A549 (cell line): ENCODE measurements at regions of chr5 and their contacts with region 1.

Region 1: GRCh38 chr5:16160706-16161105 is 18.9 kb downstream of the MARCHF11 start:
- DNase-seq: peak; percentile 20 to 73
- ATAC-seq: peak; percentile 95
- H3K4me3 ChIP-seq: no peak overlapping the region
- H3K27ac ChIP-seq: no peak overlapping the region
- H3K4me1 ChIP-seq: no peaks in the 10 kb centered on the region
- CTCF ChIP-seq: peak; percentile 70
- EP300 ChIP-seq: no peak
- POLR2A ChIP-seq: no peak
- RAD21 ChIP-seq: peak; percentile 68 to 77

Region 2: DNA sequence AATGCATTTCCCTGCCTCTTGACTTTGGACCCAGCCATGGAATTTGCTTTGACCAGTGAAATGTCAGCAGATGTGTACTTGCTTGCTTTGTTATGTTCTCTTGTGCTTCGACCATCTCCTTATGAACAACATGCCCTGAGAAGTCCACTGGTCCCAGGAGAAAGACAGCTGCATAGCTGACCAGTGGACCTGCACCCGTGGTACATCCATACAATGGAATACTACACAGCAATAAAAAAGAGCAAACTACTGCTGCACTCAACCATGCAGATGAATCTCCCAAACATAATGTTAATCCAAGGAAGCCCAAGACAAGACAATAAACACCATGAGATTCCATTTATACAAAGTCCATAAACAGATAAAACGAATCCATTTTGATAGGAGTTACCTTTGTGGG is 11.1 kb before region 1 on chr5:
- CTCF ChIA-PET with region 1: interaction called, 23 read pairs
- POLR2A ChIA-PET with region 1: no interaction called
- DNase-seq: no peak
- ATAC-seq: no peak
- H3K4me3 ChIP-seq: no peak overlapping the region
- H3K27ac ChIP-seq: no peak overlapping the region
- H3K4me1 ChIP-seq: no peaks in the 10 kb centered on the region
- CTCF ChIP-seq: no peak
- EP300 ChIP-seq: no peak
- POLR2A ChIP-seq: no peak
- RAD21 ChIP-seq: no peak

Region 3: GRCh38 chr5:16178745-16179372 is 18.2 kb after region 1 on chr5:
- CTCF ChIA-PET with region 1: interaction called, 11 read pairs
- POLR2A ChIA-PET with region 1: no interaction called
- DNase-seq: no peak
- ATAC-seq: no peak
- H3K4me3 ChIP-seq: no peak overlapping the region
- H3K27ac ChIP-seq: no peak overlapping the region
- H3K4me1 ChIP-seq: no peaks in the 10 kb centered on the region
- CTCF ChIP-seq: no peak
- EP300 ChIP-seq: no peak
- POLR2A ChIP-seq: no peak
- RAD21 ChIP-seq: no peak

Region 4: GRCh38 chr5:16271861-16272260 is 111.2 kb after region 1 on chr5:
- CTCF ChIA-PET with region 1: no interaction called
- POLR2A ChIA-PET with region 1: no interaction called
- DNase-seq: no peak
- ATAC-seq: no peak
- H3K4me3 ChIP-seq: no peak overlapping the region
- H3K27ac ChIP-seq: no peak overlapping the region
- H3K4me1 ChIP-seq: no peaks in the 10 kb centered on the region
- CTCF ChIP-seq: no peak
- EP300 ChIP-seq: no peak
- POLR2A ChIP-seq: no peak
- RAD21 ChIP-seq: no peak

Region 5: GRCh38 chr5:16456103-16456832 is 295.6 kb after region 1 on chr5:
- CTCF ChIA-PET with region 1: interaction called, 28 read pairs
- POLR2A ChIA-PET with region 1: interaction called, 4 read pairs
- DNase-seq: peak; percentile 40 to 67
- ATAC-seq: peak; percentile 73 to 86
- H3K4me3 ChIP-seq: no peak overlapping the region
- H3K27ac ChIP-seq: peak overlapping the region in 1 of 2 experiments; percentile 52; a peak in 2 of 6 replicates
- H3K4me1 ChIP-seq: peaks cover 5% of the 10 kb centered on the region; the same call in 2 of the 3 replicates
- CTCF ChIP-seq: peak; percentile 82
- EP300 ChIP-seq: no peak
- POLR2A ChIP-seq: no peak
- RAD21 ChIP-seq: peak; percentile 54 to 60